ENCODE measurements at regions of chr11 and their contacts with region 1.

Region 1: GRCh38 chr11:41245702-41246398 is 213.6 kb downstream of the LRRC4C start:
- DNase-seq: peak; percentile 24

Region 2: DNA sequence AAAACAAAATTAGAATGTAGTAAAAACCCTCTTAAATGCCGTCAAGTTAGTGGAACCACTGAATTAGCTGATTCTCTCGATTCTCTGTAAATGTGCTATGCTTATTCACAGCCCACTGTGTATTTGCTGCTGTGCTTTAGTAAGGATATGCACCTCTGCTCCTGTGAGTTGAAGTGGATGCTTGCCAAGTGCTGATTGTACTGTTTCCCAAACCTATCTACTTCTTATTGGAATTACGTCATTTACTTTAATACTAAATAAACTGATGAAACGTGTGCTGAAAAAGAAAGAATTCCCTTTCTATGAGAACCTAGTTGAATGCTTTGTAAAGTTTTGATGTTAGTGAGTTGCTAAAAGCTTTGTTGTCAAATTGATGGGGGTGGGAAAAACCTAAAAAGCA is 55.2 kb after region 1 on chr11:
- in situ Hi-C with region 1: no loop called
- DNase-seq: no peak

Region 3: DNA sequence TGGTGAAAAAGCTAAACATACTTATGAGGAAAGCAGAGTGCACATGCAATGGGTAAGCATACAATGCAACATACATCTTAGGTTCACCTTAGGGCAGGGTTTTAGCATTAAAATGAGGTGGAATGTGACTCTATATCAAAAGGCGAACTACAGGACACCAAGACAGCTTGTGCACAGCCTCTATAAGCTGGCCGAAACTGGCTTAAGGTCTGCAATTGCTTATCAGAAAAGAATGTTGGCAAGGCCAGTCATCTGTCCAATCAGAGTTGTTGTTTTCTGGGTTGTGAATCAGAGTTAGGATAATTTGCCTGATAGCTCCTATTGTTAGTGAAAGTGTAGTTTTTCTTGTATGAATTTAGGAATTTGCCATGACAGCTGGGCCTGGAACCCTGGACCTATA is 137.1 kb after region 1 on chr11:
- in situ Hi-C with region 1: no loop called
- DNase-seq: peak; percentile 53

Region 4: DNA sequence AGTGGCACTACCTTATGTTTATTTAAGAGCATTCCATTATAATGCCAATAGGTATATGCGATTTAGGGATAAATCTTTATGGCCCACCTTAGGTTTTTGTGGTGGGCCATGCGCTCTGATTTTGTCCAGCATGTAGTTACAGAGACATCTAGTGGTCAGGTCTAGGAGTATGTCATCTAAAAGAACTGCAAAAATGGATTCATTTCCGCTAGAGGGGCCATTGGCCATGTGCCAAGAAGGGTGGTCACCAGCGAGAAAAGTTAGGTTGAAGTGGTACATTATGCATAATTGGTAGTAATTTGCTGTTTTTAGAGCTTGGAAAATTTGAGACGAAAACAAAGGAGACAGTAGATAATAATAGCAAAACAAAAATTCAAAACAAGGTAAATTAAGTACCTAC is 185.9 kb after region 1 on chr11:
- in situ Hi-C with region 1: loop called (anchors 25 kb)
- DNase-seq: peak; percentile 41

Region 5: GRCh38 chr11:41612415-41612814 is 366.6 kb after region 1 on chr11:
- in situ Hi-C with region 1: no loop called
- DNase-seq: peak; percentile 18